Heart left ventricle (tissue), 16 donors: ENCODE measurements at regions of chr4 and their contacts with region 1.

Region 1: DNA sequence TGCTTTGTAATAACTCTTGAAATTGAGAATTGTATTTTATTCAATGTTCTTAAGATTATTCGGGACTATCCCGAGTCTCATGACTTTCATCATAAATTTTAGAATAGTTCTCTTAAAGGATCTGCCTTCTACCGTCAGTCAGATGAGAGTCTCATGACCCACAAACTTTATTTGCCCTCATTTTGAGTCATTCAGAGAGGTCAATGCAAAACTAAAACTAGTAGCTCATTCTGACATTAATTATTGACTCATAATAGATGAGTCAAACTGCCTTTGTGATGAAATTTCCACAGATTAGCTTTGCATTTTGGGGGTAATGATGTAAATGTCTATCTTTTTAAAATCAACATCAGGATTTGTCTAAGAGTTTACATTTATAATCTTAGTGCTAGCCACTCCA is 1527.3 kb downstream of the TECRL start:
- DNase-seq: no peak
- ATAC-seq: no peak
- H3K4me3 ChIP-seq: no peak overlapping the region
- H3K27ac ChIP-seq: no peak overlapping the region
- H3K4me1 ChIP-seq: no peaks in the 10 kb centered on the region
- H3K27me3 ChIP-seq: no peaks in the 10 kb centered on the region
- CTCF ChIP-seq: no peak
- POLR2A ChIP-seq: no peak

Region 2: GRCh38 chr4:62434921-62435320 is 447.0 kb before region 1 on chr4:
- intact Hi-C with region 1: loop called in 1 of 10 experiments (anchors 5 kb)
- DNase-seq: no peak
- ATAC-seq: no peak
- H3K4me3 ChIP-seq: no peak overlapping the region
- H3K27ac ChIP-seq: no peak overlapping the region
- H3K4me1 ChIP-seq: no peaks in the 10 kb centered on the region
- H3K27me3 ChIP-seq: no peaks in the 10 kb centered on the region
- CTCF ChIP-seq: no peak
- POLR2A ChIP-seq: no peak

Region 3: DNA sequence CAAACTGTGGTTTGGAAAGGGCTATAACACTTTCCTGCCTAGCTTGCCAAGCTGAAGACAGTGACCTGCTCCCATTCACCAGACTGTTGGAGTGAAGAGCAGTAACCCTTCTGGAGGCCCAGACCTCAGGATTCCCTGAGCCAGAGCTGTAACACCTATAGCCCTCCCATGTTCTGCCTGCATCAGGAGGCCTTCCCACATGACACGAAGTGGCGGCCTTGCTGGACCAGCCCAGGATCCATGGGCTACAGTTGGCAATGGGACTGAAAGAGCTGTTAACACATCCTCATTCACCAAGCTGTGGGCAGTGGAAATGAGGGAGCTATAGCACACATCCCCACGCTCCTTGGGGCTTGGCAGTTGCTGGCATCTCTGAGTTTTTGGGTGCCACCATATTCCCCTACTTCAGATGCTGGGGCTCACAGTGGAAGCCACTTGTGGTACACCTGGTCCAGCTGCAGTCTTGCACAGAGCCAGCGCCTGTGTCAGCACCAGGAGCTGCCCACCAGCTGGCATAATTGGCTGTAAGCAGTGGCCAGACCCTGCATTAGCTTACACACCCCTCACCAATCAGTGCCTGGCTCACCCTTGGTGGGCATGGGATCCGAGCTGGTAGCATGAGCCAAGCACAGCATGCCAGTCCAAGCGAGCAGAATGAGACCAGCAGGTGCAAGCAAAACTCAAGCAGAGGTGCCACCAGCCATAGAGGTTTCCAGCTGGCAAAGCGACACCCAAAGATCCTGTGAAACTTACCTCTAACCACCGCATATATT is 498.0 kb after region 1 on chr4:
- intact Hi-C with region 1: no loop called
- DNase-seq: no peak
- ATAC-seq: no peak
- H3K4me3 ChIP-seq: no peak overlapping the region
- H3K27ac ChIP-seq: no peak overlapping the region
- H3K4me1 ChIP-seq: no peaks in the 10 kb centered on the region
- H3K27me3 ChIP-seq: no peaks in the 10 kb centered on the region
- CTCF ChIP-seq: no peak
- POLR2A ChIP-seq: no peak

Region 4: DNA sequence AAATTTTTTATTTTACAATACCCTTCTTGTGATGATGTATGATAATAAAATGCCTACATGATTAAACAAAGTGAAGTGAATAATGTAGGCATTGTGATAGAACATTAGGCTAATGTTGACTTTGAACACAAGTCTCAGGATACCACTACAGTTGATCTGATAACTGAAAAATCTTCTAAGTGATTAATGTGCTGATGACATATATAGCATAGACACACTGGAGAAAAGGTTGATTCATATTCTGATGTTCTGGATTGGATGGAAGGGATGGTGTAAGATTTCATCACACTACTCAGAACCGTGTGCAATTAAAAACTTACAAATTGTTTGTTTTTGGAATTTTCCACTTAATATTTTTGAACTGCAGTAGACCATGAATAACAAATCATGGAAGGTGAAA is 788.8 kb after region 1 on chr4:
- intact Hi-C with region 1: loop called in 1 of 10 experiments (anchors 10 kb)
- DNase-seq: no peak
- ATAC-seq: no peak
- H3K4me3 ChIP-seq: no peak overlapping the region
- H3K27ac ChIP-seq: no peak overlapping the region
- H3K4me1 ChIP-seq: no peaks in the 10 kb centered on the region
- H3K27me3 ChIP-seq: no peaks in the 10 kb centered on the region
- CTCF ChIP-seq: no peak
- POLR2A ChIP-seq: no peak